K562 (cell line): ENCODE measurements at regions of chr16 and their contacts with region 1.

Region 1: GRCh38 chr16:48164907-48165726 is 9.3 kb upstream of the ABCC12 start:
- DNase-seq: peak; percentile 80 to 84 (median 82)
- ATAC-seq: peak; percentile 100
- H3K4me3 ChIP-seq: no peak overlapping the region
- H3K27ac ChIP-seq: no peak overlapping the region
- H3K4me1 ChIP-seq: no peaks in the 10 kb centered on the region
- H3K27me3 ChIP-seq: peaks cover 4 to 22% of the 10 kb centered on the region in 2 experiments; a peak in 2 of 5 replicates
- CTCF ChIP-seq: peak; percentile 89 to 92 (median 92)
- EP300 ChIP-seq: no peak
- POLR2A ChIP-seq: no peak
- RAD21 ChIP-seq: peak; percentile 75 to 89

Region 2: GRCh38 chr16:46555951-46556350 is 1609.2 kb before region 1 on chr16:
- CTCF ChIA-PET with region 1: no interaction called
- POLR2A ChIA-PET with region 1: no interaction called
- in situ Hi-C with region 1: no loop called
- intact Hi-C with region 1: loop called (anchors 10 kb)
- DNase-seq: no peak
- ATAC-seq: no peak
- H3K4me3 ChIP-seq: no peak overlapping the region
- H3K27ac ChIP-seq: no peak overlapping the region
- H3K4me1 ChIP-seq: peaks cover 0 to 2% of the 10 kb centered on the region in 2 experiments; a peak in 2 of 5 replicates
- H3K27me3 ChIP-seq: no peaks in the 10 kb centered on the region
- CTCF ChIP-seq: no peak
- EP300 ChIP-seq: no peak
- POLR2A ChIP-seq: no peak
- RAD21 ChIP-seq: no peak

Region 3: GRCh38 chr16:46853713-46854443 is 1311.2 kb before region 1 on chr16:
- CTCF ChIA-PET with region 1: interaction called, 3 read pairs
- POLR2A ChIA-PET with region 1: no interaction called
- in situ Hi-C with region 1: no loop called
- intact Hi-C with region 1: loop called (anchors 10 kb)
- DNase-seq: peak; percentile 60 to 77 (median 68)
- ATAC-seq: peak; percentile 92
- H3K4me3 ChIP-seq: no peak overlapping the region
- H3K27ac ChIP-seq: no peak overlapping the region
- H3K4me1 ChIP-seq: peaks cover 0 to 6% of the 10 kb centered on the region in 2 experiments; a peak in 1 of 5 replicates
- H3K27me3 ChIP-seq: peaks cover 0 to 10% of the 10 kb centered on the region in 2 experiments; a peak in 3 of 5 replicates
- CTCF ChIP-seq: peak; percentile 89 to 94 (median 91)
- EP300 ChIP-seq: no peak
- POLR2A ChIP-seq: no peak
- RAD21 ChIP-seq: peak; percentile 86 to 94

Region 4: DNA sequence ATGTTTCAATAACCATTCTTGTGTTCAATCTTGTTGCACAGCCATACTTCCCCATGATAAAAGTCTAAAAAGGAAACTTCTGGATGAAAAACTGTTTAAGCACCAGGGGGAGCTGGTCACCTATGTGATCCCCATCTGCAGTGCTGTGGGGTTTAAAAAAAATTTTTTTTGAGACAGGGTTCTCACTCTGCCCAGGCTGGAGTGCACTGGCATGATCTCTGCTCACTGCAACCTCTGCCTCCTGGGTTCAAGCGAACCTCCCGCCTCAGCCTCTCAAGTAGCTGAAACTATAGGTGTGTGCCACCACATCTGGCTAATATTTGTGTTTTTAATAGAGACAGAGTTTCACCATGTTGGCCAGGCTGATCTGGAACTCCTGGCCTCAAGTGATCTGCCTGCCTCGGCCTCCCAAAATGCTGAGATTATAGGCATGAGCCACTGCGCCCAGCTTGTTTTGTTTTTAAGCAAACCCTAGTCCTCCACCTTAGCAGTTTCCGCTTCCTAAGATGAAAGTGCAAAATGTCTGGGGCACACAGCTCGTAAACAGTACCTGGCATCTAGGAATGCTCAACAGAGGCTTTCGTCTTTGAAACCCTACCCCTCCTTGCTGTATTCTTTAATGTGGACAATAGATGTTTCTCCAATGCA is 1217.1 kb before region 1 on chr16:
- CTCF ChIA-PET with region 1: interaction called, 7 read pairs
- POLR2A ChIA-PET with region 1: no interaction called
- in situ Hi-C with region 1: loop called (anchors 10 kb)
- intact Hi-C with region 1: loop called (anchors 5 kb)
- DNase-seq: peak; percentile 45 to 64 (median 50)
- ATAC-seq: peak; percentile 86
- H3K4me3 ChIP-seq: no peak overlapping the region
- H3K27ac ChIP-seq: no peak overlapping the region
- H3K4me1 ChIP-seq: peaks cover 3% of the 10 kb centered on the region in 2 experiments; a peak in 3 of 5 replicates
- H3K27me3 ChIP-seq: no peaks in the 10 kb centered on the region; a peak in 1 of 5 replicates
- CTCF ChIP-seq: peak; percentile 64 to 85 (median 66)
- EP300 ChIP-seq: no peak
- POLR2A ChIP-seq: no peak
- RAD21 ChIP-seq: peak; percentile 79 to 89

Region 5: DNA sequence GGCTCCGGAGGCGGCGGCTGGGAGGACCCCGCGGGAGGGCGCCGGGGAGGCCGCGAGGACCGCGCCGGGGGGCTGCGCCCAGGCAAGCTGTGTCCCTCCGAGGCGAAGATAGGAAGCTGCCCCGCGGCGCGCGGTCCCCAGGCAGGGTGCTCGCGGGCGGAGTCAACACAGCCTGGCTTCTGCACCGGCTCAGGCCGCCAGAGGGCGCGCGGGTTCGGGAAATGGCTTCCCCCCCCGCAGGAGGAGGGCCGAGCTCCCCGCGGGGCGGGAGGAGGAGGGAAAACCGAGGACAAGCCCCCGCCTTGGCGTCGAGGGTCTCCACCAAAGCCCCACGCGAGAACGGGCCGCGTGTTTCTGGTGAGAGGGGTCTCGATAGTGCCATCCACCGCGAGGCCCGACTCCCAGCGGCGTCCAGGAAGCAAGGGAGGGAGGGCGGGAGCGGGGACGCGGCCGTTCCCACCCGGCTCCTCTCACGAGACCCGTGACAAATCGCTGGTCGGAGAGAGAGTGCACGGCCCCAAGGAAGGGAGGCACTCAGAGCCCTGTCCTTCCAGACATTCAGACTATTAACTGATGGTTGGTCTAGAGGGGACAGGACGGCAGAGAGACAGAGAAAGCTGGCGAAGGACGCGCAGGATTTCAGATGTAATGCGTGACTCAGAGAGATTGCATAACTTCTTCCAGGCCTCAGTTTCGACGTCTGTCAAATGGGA is 1127.2 kb before region 1 on chr16:
- CTCF ChIA-PET with region 1: no interaction called
- POLR2A ChIA-PET with region 1: no interaction called
- in situ Hi-C with region 1: loop called (anchors 5 kb)
- intact Hi-C with region 1: no loop called
- DNase-seq: peak; percentile 92 to 98 (median 97)
- ATAC-seq: peak; percentile 98
- H3K4me3 ChIP-seq: peak overlapping the region; percentile 61
- H3K27ac ChIP-seq: no peak overlapping the region
- H3K4me1 ChIP-seq: peaks cover 0 to 13% of the 10 kb centered on the region in 2 experiments; a peak in 3 of 5 replicates
- H3K27me3 ChIP-seq: peaks cover 15 to 43% of the 10 kb centered on the region in 2 experiments; a peak in 4 of 5 replicates
- CTCF ChIP-seq: peak; percentile 92 to 95 (median 94)
- EP300 ChIP-seq: no peak
- POLR2A ChIP-seq: no peak
- RAD21 ChIP-seq: peak; percentile 77 to 93

Region 6: DNA sequence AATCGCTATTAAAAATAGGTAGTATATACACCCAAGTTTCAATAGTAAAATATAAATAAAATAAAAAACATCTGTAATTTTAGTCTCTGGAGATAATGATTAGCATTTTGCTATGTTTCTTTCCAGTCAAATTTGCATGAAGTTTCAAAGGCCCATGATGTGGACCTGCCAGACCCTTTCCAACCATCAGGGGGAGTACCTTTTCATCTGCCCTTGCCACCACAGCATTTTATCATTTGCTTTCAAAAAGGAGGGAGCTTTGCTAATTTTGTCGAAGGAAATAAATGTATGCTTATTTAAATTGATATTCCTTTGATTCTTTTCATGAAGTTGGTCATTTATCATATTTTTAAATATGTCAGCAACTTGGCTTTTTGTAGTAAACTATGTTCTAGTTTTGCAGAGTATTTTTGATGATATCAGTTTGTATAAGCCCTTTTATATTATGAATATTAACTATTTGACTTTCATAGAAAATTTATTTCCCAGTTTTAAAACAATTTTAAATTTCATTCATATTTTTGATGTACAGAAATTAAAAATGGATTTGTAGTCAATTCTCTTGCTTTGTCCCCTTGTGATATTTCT is 906.1 kb before region 1 on chr16:
- CTCF ChIA-PET with region 1: no interaction called
- POLR2A ChIA-PET with region 1: no interaction called
- in situ Hi-C with region 1: no loop called
- intact Hi-C with region 1: loop called (anchors 10 kb)
- DNase-seq: peak; percentile 52 to 61 (median 56)
- ATAC-seq: peak; percentile 86
- H3K4me3 ChIP-seq: no peak overlapping the region
- H3K27ac ChIP-seq: no peak overlapping the region
- H3K4me1 ChIP-seq: no peaks in the 10 kb centered on the region
- H3K27me3 ChIP-seq: no peaks in the 10 kb centered on the region
- CTCF ChIP-seq: peak; percentile 57 to 74 (median 73)
- EP300 ChIP-seq: no peak
- POLR2A ChIP-seq: no peak
- RAD21 ChIP-seq: peak; percentile 31 to 60